ENCODE measurements at regions of chr12 and their contacts with region 1.

Region 1: GRCh38 chr12:95918194-95918993 is 24.0 kb downstream of the CCDC38 start:
- DNase-seq: peak; percentile 65
- H3K4me3 Mint-ChIP-seq: no peak overlapping the region
- H3K27ac Mint-ChIP-seq: no peak overlapping the region
- H3K4me1 Mint-ChIP-seq: no peaks in the 10 kb centered on the region
- H3K27me3 Mint-ChIP-seq: peaks cover 2% of the 10 kb centered on the region

Region 2: GRCh38 chr12:95959107-95959506 is 40.7 kb after region 1 on chr12:
- CTCF ChIA-PET with region 1: interaction called, 8 read pairs
- intact Hi-C with region 1: loop called (anchors 1 kb)
- DNase-seq: no peak
- H3K4me3 Mint-ChIP-seq: no peak overlapping the region
- H3K27ac Mint-ChIP-seq: no peak overlapping the region
- H3K4me1 Mint-ChIP-seq: no peaks in the 10 kb centered on the region
- H3K27me3 Mint-ChIP-seq: no peaks in the 10 kb centered on the region

Measured in activated naive CD4-positive, alpha-beta T cell treated with anti-CD3 and anti-CD28 coated beads for 36 hours (primary cell).